Prostate gland (tissue), 2 donors: ENCODE measurements at regions of chr9 and their contacts with region 1.

Region 1: GRCh38 chr9:107102677-107103076 is 180.4 kb upstream of the RAD23B start:
- DNase-seq: no peak
- H3K4me3 ChIP-seq: no peak overlapping the region
- H3K27ac ChIP-seq: no peak overlapping the region
- H3K4me1 ChIP-seq: no peaks in the 10 kb centered on the region
- H3K27me3 ChIP-seq: no peaks in the 10 kb centered on the region
- CTCF ChIP-seq: no peak
- POLR2A ChIP-seq: no peak

Region 2: DNA sequence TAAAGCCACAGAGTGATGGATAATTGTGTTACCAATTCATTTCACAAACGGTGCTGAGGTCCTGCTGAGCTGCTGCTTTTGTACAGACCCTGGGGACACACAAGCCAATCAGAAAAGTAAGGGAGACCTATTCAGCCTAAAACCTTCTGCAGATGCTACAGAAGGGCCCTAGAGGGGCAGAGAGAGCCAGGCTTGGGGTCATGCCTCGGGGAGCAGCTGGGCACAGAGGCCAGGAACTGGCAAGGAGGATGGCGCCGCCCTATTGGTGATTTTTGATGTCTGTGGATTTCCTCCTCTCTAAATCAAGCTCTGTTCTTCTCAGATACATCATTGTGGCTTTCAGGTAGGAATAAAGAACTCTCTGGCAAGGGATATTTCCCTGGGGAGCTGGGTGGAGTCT is 57.8 kb before region 1 on chr9:
- intact Hi-C with region 1: loop called (anchors 10 kb)
- DNase-seq: no peak
- H3K4me3 ChIP-seq: no peak overlapping the region
- H3K27ac ChIP-seq: no peak overlapping the region
- H3K4me1 ChIP-seq: no peaks in the 10 kb centered on the region
- H3K27me3 ChIP-seq: no peaks in the 10 kb centered on the region
- CTCF ChIP-seq: no peak
- POLR2A ChIP-seq: no peak